Activated B cell treated with CpG ODN at 0.5 μM for 24 hours (primary cell): ENCODE measurements at regions of chr1 and their contacts with region 1.

Region 1: DNA sequence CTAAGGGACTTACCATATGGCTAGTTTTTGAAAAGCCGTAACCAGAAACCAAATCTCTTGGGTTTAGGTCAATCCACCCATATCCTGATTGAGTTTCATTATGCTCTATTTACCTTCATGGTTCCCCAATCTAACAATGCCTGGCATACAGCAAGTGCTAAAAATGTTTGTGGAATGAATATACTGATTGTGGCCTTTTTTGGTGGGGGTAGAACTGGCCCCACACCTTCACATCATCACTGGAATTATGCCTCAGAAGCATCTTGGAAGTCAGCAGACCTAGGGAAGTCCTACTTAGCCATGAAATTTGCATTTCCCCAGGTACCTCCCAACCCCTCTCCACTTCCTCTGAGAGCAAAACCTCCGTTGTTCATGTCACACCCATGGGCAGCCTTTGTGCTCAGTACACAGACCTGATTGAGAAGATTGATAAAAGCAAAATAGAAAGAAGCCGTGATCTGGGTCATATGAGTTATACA is 17.8 kb upstream of the SLAMF1 start:
- DNase-seq: no peak
- ATAC-seq: peak; percentile 86
- H3K4me3 Mint-ChIP-seq: peak overlapping the region; percentile 61
- H3K27ac Mint-ChIP-seq: peak overlapping the region; percentile 86
- H3K4me1 Mint-ChIP-seq: peaks cover 69% of the 10 kb centered on the region
- H3K27me3 Mint-ChIP-seq: no peaks in the 10 kb centered on the region
- CTCF ChIP-seq: no peak

Region 2: DNA sequence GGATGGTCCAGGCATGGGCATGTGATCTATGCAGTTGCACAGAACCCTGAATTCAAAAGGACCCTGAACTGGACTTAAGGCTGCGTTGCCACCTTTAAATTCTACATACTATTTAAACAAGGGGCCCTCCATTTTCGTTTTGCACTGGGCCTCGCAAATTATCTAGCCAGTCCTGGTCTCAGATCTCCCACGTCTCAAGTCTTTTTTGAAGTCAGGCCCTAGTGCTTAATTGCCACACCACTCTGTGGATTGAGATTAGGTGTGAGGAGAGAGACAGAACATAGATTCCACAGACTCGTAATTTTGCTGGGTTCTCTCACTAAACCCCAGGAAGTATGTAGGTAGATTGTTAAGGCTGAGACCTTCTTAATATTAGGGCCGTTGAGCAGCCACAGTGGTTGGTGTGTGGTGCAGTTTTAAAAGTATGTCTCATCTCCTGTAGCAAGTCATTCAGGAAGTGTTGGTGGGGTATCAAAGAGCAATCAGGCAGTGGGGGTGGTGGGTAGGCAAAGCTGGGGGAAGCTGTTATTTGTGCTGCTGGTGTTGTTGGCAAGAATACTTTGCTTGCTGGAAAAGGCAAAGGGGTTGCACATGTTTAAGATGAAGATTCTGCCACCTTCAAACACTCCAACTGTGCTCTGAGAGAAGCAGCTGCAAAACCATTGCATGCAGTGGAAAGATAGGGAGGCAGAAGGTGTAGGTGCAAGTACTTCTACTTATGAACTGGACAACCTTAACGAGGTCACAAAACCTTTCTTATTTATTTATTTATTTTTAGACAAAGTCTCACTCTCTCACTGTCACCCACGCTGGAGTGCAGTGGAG is 96.5 kb before region 1 on chr1:
- CTCF ChIA-PET with region 1: no interaction called
- POLR2A ChIA-PET with region 1: no interaction called
- intact Hi-C with region 1: no loop called
- DNase-seq: no peak
- ATAC-seq: peak; percentile 62
- H3K4me3 Mint-ChIP-seq: peak overlapping the region; percentile 21
- H3K27ac Mint-ChIP-seq: peak overlapping the region; percentile 54
- H3K4me1 Mint-ChIP-seq: peaks cover 76% of the 10 kb centered on the region
- H3K27me3 Mint-ChIP-seq: no peaks in the 10 kb centered on the region
- CTCF ChIP-seq: no peak

Region 3: DNA sequence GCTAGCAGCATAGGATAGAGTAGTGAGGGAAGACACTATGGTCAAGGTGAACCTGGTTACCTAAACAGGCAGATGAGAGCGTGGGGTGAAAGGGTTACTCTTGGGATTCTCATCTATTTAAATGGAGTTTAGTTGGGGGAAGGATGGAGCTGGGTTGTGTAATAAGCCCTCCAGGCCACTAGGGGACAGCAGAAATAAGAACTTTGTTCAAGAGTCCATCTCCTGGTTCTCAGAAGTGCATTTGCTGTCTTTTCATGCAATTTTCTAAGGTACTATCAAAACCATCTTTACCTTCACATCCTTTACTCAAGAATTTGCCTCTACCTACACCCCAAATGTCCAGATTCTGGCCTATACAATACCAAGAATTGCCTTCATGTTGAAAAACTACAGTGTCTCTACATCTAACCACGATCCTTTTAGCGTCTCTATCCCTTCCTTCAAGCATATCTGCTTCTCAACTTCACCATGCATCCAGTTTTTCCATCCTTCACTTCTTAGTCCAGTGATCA is 45.8 kb before region 1 on chr1:
- CTCF ChIA-PET with region 1: no interaction called
- POLR2A ChIA-PET with region 1: interaction called, 9 read pairs
- intact Hi-C with region 1: loop called (anchors 2 kb)
- DNase-seq: no peak
- ATAC-seq: no peak
- H3K4me3 Mint-ChIP-seq: no peak overlapping the region
- H3K27ac Mint-ChIP-seq: peak overlapping the region; percentile 5
- H3K4me1 Mint-ChIP-seq: peaks cover 58% of the 10 kb centered on the region
- H3K27me3 Mint-ChIP-seq: no peaks in the 10 kb centered on the region
- CTCF ChIP-seq: no peak

Region 4: GRCh38 chr1:160646711-160647328 is 17.8 kb before region 1 on chr1 and contains the start of gene SLAMF1:
- CTCF ChIA-PET with region 1: interaction called, 7 read pairs
- POLR2A ChIA-PET with region 1: interaction called, 18 read pairs
- intact Hi-C with region 1: loop called (anchors 1 kb)
- DNase-seq: peak; percentile 35
- ATAC-seq: peak; percentile 84
- H3K4me3 Mint-ChIP-seq: peak within 1 kb of the TSS; percentile 95
- H3K27ac Mint-ChIP-seq: peak within 1 kb of the TSS; percentile 91
- H3K4me1 Mint-ChIP-seq: peaks cover 88% of the 10 kb centered on the region
- H3K27me3 Mint-ChIP-seq: no peaks in the 10 kb centered on the region
- CTCF ChIP-seq: no peak
- total RNA-seq, gene SLAMF1: 85.7 and 91.7 TPM in 2 replicates

Region 5: DNA sequence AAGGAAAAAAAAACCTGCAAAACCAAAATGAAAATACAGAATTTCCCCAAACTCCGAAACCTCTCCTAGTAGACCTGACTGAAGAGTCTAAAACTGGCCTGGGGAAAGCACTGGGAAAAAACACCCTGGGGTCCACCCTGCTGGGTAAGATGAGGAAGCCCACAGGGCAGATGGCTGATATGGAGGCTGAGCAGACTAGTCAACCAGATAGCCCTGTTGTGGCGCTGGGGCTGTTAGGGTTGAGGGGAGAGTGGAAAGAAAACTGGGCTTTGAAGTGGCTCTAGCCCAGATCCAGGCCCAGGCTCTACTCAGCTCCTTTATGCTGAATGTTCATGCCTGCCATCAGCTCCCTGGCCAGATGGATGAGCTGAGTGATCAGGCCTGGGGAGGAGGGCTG is 11.0 kb before region 1 on chr1:
- CTCF ChIA-PET with region 1: no interaction called
- POLR2A ChIA-PET with region 1: interaction called, 14 read pairs
- intact Hi-C with region 1: loop called (anchors 1 kb)
- DNase-seq: no peak
- ATAC-seq: peak; percentile 78
- H3K4me3 Mint-ChIP-seq: peak overlapping the region; percentile 65
- H3K27ac Mint-ChIP-seq: peak overlapping the region; percentile 93
- H3K4me1 Mint-ChIP-seq: peaks cover 92% of the 10 kb centered on the region
- H3K27me3 Mint-ChIP-seq: no peaks in the 10 kb centered on the region
- CTCF ChIP-seq: no peak

Region 6: GRCh38 chr1:160830321-160831153 is 165.9 kb after region 1 on chr1:
- CTCF ChIA-PET with region 1: no interaction called
- POLR2A ChIA-PET with region 1: no interaction called
- intact Hi-C with region 1: no loop called
- DNase-seq: peak; percentile 56
- ATAC-seq: peak; percentile 83
- H3K4me3 Mint-ChIP-seq: no peak overlapping the region
- H3K27ac Mint-ChIP-seq: peak overlapping the region; percentile 68
- H3K4me1 Mint-ChIP-seq: peaks cover 9% of the 10 kb centered on the region
- H3K27me3 Mint-ChIP-seq: no peaks in the 10 kb centered on the region
- CTCF ChIP-seq: no peak

Region 7: DNA sequence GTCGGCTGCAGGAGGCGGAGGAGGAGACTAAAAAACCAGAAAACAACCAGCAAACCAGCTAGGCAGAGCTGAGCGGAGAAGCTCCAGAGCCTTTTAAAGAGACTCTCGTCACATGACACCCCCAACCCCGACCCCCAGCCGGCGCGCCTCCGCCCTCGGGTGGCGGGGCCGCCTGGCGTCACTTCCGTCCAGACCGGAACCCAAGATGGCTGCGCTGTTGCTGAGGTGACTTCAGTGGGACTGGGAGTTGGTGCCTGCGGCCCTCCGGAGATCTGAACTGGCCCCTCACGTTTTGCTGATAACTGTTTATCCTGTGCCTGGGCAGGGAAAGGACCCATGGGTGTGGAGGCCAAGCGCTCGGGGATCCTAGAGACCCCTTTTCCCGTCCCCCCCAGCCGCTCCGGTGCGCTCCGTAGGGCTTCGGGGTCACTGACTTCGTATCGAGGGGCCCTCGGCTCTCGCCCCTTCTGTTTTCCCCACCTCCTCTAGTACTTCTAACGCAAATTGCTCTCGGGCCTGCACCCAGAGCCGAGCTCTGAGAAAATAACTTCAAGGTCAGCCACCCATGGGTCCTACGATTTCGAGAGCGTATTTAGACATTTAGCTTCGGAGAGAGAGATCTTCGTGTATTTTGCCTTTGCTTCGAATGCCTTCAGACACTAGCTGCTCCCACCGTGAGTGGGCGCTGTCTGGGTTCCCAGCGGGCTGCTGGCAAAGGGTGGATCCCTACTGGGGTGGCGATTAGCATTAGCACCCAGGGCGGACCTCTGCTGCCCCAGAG is 649.8 kb after region 1 on chr1 and contains the start of gene SDHC:
- CTCF ChIA-PET with region 1: no interaction called
- POLR2A ChIA-PET with region 1: no interaction called
- intact Hi-C with region 1: no loop called
- DNase-seq: peak; percentile 83
- ATAC-seq: peak; percentile 97
- H3K4me3 Mint-ChIP-seq: peak within 1 kb of the TSS; percentile 98
- H3K27ac Mint-ChIP-seq: peak within 1 kb of the TSS; percentile 98
- H3K4me1 Mint-ChIP-seq: peaks cover 21% of the 10 kb centered on the region
- H3K27me3 Mint-ChIP-seq: no peaks in the 10 kb centered on the region
- CTCF ChIP-seq: no peak
- total RNA-seq, gene SDHC: 160 and 179 TPM in 2 replicates